Activated T-helper 1 cell treated with anti-CD3 and anti-CD28 coated beads, Interleukin-12 subunit alpha, Interleukin-12 subunit beta, Interleukin-2, Interleukin-4 antibody, amounts not matched to agents 30 ng/mL and 10 ng/mL and 1 ng/mL, durations not matched to agents 14 hours and 24 hours and 36 hours (primary cell): ENCODE measurements at regions of chr2 and their contacts with region 1.

Region 1: DNA sequence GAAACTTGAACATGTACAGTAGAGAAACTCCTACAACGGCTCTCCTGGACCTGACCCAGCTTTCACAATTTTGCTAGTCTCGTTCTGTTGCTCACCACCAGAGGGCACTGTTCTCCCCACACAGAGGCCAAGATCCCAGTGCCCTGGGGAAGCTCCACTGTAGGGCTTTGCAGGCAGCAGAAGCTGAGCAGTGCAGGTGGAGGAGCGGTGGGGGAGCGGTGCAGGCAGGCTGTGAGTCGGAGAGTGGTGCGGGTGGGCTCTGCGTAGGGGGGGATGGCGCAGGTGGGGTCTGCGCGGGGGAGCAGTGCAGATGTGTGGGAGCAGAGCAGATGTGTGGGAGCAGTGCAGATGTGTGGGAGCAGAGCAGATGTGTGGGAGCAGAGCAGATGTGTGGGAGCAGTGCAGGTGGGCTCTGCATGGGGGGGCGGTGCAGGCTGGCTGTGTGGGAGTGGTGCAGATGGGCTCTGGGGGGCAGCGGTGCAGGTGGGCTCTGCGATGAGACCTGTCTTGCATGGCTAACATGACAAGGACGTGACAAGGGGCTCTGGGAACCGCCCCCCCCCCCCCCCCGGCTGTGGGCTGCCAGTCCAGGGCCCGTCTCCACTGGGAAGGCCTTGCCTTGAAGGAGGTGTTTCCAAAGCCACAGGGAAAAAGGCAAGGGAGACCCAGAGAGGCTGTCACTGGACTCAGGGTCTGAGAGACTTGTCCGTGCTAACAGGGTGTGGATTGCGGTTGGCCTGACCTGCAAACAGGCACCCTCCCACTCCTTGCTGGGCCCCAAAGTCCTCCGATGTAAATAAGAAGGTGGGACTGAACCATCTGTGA is 7.3 kb downstream of the CYS1 start:
- DNase-seq: peak; percentile 76
- H3K4me3 Mint-ChIP-seq: no peak overlapping the region
- H3K27ac Mint-ChIP-seq: no peak overlapping the region
- H3K4me1 Mint-ChIP-seq: peaks cover 16% of the 10 kb centered on the region
- H3K27me3 Mint-ChIP-seq: peaks cover 49% of the 10 kb centered on the region

Region 2: DNA sequence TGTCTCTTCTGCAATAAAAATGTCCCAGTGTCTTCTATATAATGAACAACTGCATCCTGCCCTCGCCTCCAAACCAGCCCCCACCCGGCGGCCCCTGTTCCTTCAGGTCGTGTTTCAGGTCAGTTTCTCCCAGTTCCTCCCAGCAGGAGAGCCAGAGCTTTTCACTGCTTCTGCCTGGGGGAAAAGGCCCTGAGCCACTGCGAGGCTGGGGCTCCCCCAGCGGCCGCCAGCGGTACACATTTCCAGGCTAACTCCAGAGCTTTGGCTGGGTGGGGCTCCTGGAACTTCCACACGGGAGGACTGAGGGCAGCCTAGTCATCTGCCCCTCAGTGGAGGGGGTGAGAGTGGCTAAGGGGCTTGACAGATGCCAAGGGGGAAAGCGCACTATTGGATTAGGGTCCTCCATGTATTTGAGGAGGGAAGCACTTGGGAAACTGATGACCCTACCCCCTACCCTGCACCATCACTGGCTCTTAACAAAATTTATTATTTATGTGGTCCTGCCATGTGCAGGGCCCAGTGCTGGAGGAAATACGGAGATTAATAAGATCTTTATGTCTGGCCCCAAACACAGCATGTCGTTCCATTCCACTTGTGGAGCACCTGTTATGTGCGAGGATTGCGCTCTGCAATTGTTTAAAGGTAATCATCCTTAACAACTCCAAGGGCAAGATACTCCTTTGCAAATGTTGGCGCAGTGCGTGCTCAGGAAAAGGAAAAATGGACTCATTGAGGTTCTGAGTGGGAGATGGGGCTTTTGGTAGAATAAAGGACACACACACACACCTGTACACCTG is 24.7 kb after region 1 on chr2:
- intact Hi-C with region 1: loop called (anchors 1 kb)
- DNase-seq: no peak
- H3K4me3 Mint-ChIP-seq: no peak overlapping the region
- H3K27ac Mint-ChIP-seq: no peak overlapping the region
- H3K4me1 Mint-ChIP-seq: peaks cover 10% of the 10 kb centered on the region
- H3K27me3 Mint-ChIP-seq: peaks cover 34% of the 10 kb centered on the region

Region 3: DNA sequence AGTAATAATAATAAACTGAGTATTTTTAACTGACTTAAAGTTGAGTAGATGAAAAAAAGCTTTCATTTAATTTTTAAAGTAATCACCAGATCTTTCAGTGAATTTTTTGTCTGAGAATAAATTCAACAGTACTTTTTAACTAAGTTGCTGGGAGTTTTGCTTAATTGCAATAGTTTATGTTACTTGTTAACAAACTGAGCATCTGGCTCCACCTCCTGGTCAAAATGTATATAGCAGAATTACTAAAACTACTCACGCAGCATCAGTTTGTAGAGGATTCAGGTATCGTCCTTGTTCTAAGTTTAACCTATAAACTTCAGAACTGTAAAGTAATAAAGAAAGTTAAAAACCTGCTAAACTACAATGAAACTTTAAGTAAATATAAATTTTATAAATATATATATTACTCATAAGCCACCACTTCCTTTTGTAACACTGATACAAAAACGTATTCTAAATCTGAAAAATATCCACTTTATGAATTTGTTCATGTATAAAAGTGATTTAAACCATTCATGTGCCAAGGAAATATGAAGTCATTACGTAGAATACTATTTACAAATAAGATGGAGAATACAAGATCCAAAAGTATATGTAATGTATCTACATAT is 595.6 kb after region 1 on chr2:
- intact Hi-C with region 1: loop called (anchors 2 kb)
- DNase-seq: no peak
- H3K4me3 Mint-ChIP-seq: no peak overlapping the region
- H3K27ac Mint-ChIP-seq: no peak overlapping the region
- H3K4me1 Mint-ChIP-seq: peaks cover 5% of the 10 kb centered on the region
- H3K27me3 Mint-ChIP-seq: no peaks in the 10 kb centered on the region